ENCODE measurements at regions of chr4 and their contacts with region 1.

Region 1: DNA sequence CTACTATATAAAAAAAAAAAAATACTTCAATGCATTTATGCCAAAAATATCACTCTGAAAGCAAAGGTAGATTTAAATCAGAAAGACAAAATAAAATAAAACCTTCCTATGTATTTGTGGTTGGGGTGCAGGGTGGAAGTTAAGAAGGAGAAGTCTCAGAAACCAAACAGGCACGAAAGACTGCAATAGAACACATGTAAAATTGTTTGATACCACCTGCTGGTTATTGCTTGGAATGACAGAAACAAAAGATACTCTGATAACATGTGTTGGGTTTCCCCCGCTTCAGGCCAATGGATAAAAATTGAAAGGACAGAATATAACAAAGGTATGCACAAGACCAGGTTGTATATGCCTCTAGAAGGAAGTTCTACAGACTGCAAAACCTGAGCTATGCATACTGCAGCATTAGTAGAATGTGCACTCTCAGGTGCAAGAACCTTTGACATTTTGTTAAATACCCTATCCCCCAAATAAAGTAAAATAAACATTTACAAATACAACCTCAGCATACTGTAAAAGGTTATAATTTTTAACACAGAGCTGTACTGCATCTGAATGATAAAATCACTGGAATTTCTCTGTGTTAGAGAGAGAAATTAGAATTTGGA is 118.8 kb downstream of the GABRA2 start:
- DNase-seq: no peak
- ATAC-seq: no peak

Region 2: GRCh38 chr4:45453258-45453853 is 817.7 kb before region 1 on chr4:
- intact Hi-C with region 1: loop called (anchors 10 kb)
- DNase-seq: no peak
- ATAC-seq: peak; percentile 78

Region 3: GRCh38 chr4:45550766-45551366 is 720.2 kb before region 1 on chr4:
- intact Hi-C with region 1: loop called (anchors 10 kb)
- DNase-seq: no peak
- ATAC-seq: peak; percentile 53